ENCODE measurements at regions of chr20 and their contacts with region 1.

Region 1: GRCh38 chr20:53910351-53911002 is 159.9 kb downstream of the BCAS1 start:
- DNase-seq: no peak
- H3K4me3 ChIP-seq: no peak overlapping the region
- H3K27ac ChIP-seq: no peak overlapping the region
- H3K4me1 ChIP-seq: no peaks in the 10 kb centered on the region
- H3K27me3 ChIP-seq: no peaks in the 10 kb centered on the region
- CTCF ChIP-seq: no peak
- POLR2A ChIP-seq: no peak

Region 2: DNA sequence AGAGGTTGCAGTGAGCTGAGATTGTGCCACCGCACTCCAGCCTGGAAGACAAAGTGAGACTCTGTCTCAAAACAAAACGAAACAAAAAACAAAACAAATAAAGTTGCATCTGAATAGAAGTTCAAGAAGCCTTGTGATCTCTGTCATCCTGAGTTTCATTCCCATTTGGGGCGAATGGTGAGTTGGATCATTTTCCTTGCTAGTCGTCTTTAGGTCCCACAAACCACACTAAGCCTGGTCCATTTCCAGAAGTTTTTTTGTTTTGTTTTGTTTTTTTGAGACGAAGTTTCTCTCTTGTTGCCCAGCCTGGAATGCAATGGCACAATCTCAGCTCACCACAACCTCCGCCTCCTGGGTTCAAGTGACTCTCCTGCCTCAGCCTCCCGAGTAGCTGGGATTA is 350.7 kb before region 1 on chr20:
- intact Hi-C with region 1: no loop called
- DNase-seq: no peak
- H3K4me3 ChIP-seq: no peak overlapping the region
- H3K27ac ChIP-seq: no peak overlapping the region
- H3K4me1 ChIP-seq: no peaks in the 10 kb centered on the region
- H3K27me3 ChIP-seq: no peaks in the 10 kb centered on the region
- CTCF ChIP-seq: no peak
- POLR2A ChIP-seq: no peak

Region 3: DNA sequence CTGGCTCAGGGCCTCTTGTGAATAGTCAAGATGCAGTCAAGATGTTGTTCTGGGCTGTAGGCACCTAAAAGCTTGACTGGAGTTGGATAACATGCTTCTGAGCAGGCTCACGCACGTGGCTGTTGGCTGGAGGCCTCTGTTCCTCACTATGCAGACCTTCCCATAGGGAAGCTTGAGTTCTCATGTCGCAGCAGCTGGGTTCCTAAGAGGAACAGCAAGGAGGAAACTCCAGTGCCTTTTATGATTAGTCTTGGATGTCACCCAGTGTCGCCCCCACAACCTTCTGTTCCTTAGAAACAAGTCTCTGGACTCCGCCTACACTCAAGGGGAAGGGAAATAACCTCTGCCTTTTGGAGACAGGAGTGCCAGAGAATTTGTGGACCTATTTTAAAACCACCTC is 50.8 kb before region 1 on chr20:
- intact Hi-C with region 1: no loop called
- DNase-seq: peak in 1 of 2 donors; percentile 37
- H3K4me3 ChIP-seq: no peak overlapping the region
- H3K27ac ChIP-seq: peak overlapping the region; percentile 23 to 33
- H3K4me1 ChIP-seq: peaks cover 0 to 6% of the 10 kb centered on the region in 2 donors
- H3K27me3 ChIP-seq: no peaks in the 10 kb centered on the region
- CTCF ChIP-seq: no peak
- POLR2A ChIP-seq: no peak

Region 4: GRCh38 chr20:53872561-53873229 is 37.8 kb before region 1 on chr20:
- intact Hi-C with region 1: no loop called
- DNase-seq: no peak
- H3K4me3 ChIP-seq: peak overlapping the region in 1 of 3 donors; percentile 21
- H3K27ac ChIP-seq: peak overlapping the region; percentile 21 to 45
- H3K4me1 ChIP-seq: peaks cover 0 to 6% of the 10 kb centered on the region in 2 donors
- H3K27me3 ChIP-seq: no peaks in the 10 kb centered on the region
- CTCF ChIP-seq: no peak
- POLR2A ChIP-seq: no peak

Region 5: GRCh38 chr20:53887973-53888372 is 22.5 kb before region 1 on chr20:
- intact Hi-C with region 1: loop called (anchors 1 kb)
- DNase-seq: no peak
- H3K4me3 ChIP-seq: no peak overlapping the region
- H3K27ac ChIP-seq: no peak overlapping the region
- H3K4me1 ChIP-seq: no peaks in the 10 kb centered on the region
- H3K27me3 ChIP-seq: no peaks in the 10 kb centered on the region
- CTCF ChIP-seq: no peak
- POLR2A ChIP-seq: no peak

Measured in breast epithelium (tissue), 4 donors.